ENCODE measurements at regions of chr21 and their contacts with region 1.

Region 1: DNA sequence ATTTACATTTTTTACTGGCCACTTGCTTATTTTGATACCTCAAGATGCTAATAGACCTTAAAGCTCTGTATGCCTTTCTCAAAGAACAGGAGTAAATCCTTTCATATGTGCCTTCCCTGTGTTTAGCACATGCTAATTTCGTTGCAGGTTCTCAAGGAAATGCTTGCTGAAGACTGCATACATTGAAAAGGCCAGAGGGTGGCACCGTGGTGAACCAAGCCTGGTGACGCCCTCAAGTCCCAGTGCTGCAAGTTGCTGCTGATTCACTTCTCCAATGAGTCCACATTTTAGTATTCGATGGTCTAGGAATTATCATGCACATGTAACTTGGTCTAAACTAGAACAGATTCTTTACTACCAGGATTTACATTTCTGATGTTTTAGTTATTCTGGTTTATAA is 94.1 kb downstream of the CLDN17 start:
- DNase-seq: peak in 1 of 2 experiments; percentile 22
- H3K4me3 ChIP-seq: no peak overlapping the region
- H3K27ac ChIP-seq: no peak overlapping the region
- H3K4me1 ChIP-seq: no peaks in the 10 kb centered on the region
- H3K27me3 ChIP-seq: no peaks in the 10 kb centered on the region
- CTCF ChIP-seq: peak; percentile 44; the same call in 1 of the 2 replicates

Region 2: DNA sequence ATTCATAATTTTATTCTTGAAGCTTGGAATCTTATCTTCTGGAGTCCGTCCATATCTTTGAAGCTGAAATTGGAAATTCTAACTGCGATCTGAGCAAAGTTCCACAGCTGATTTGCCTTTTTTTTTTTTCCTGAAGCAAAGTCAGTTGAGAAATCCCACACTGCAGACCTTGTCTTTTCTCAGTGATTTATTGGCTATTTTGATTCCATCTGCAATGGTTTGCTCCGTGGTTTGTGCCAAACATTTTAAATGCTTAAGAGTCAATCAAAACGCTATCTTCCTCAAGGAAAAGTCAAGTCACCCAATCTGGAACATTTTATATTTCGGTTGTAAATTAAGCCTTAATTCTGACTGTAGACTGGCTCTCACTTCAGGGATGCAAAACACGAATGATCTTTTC is 44.5 kb before region 1 on chr21:
- CTCF ChIA-PET with region 1: no interaction called
- POLR2A ChIA-PET with region 1: no interaction called
- intact Hi-C with region 1: no loop called
- DNase-seq: no peak
- H3K4me3 ChIP-seq: no peak overlapping the region
- H3K27ac ChIP-seq: no peak overlapping the region
- H3K4me1 ChIP-seq: no peaks in the 10 kb centered on the region
- H3K27me3 ChIP-seq: no peaks in the 10 kb centered on the region
- CTCF ChIP-seq: no peak

Region 3: GRCh38 chr21:30146558-30147302 is 74.2 kb after region 1 on chr21:
- CTCF ChIA-PET with region 1: no interaction called
- POLR2A ChIA-PET with region 1: no interaction called
- intact Hi-C with region 1: no loop called
- DNase-seq: peak; percentile 49 to 82
- H3K4me3 ChIP-seq: peak overlapping the region; percentile 44; the same call in 1 of the 2 replicates
- H3K27ac ChIP-seq: peak overlapping the region; percentile 91
- H3K4me1 ChIP-seq: peaks cover 14% of the 10 kb centered on the region
- H3K27me3 ChIP-seq: no peaks in the 10 kb centered on the region
- CTCF ChIP-seq: no peak

Region 4: DNA sequence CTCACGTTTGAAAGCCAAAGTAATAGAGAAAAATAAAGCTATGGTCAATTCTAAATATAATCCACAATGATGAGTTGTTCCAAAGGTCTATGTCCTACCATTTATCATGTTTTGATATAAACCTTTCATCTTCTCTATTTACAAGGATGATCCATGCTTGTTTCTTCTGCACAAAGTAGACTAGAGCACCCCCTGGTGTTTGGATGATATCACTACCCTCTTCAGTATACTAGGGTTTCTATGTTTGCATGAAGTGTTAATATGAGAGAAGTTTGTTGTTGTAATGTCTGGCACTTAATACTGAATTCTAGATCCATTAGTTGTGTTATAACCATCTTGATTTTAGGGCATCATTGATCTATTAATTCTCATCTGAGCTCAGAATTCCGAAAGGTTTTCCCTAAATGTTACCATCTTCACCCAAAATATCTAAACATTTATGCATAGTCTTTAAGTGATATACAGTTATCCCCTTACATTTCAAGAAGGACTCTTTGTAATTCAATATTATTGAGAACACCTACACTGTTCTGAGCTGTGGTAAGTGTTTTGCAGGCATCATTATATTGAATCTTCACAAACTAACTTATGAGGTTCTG is 122.3 kb after region 1 on chr21:
- CTCF ChIA-PET with region 1: no interaction called
- POLR2A ChIA-PET with region 1: no interaction called
- intact Hi-C with region 1: loop called (anchors 1 kb)
- DNase-seq: peak in 1 of 2 experiments; percentile 41
- H3K4me3 ChIP-seq: no peak overlapping the region
- H3K27ac ChIP-seq: no peak overlapping the region
- H3K4me1 ChIP-seq: no peaks in the 10 kb centered on the region
- H3K27me3 ChIP-seq: no peaks in the 10 kb centered on the region
- CTCF ChIP-seq: peak; percentile 74

Region 5: DNA sequence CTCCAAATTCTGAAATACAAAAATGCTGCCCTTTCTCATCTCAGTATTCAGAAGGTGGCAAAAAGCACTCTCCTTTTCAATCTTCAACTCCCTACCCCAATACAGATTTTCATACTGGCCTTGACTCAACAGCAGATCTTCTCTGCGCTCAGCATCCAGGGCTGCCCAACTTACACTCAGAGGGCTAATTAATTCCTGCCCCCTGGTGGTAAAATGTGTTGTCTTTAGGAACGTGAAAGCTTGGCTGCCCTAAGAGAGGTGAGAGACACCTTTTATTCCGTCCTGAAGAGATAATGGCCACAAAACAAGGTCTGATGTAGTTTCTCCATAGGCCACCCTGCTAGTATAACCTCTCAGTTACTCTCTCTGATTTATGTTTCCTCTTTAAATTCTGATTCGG is 185.3 kb after region 1 on chr21:
- CTCF ChIA-PET with region 1: no interaction called
- POLR2A ChIA-PET with region 1: no interaction called
- intact Hi-C with region 1: loop called (anchors 2 kb)
- DNase-seq: peak in 1 of 2 experiments; percentile 12
- H3K4me3 ChIP-seq: no peak overlapping the region
- H3K27ac ChIP-seq: no peak overlapping the region
- H3K4me1 ChIP-seq: no peaks in the 10 kb centered on the region
- H3K27me3 ChIP-seq: no peaks in the 10 kb centered on the region
- CTCF ChIP-seq: peak; percentile 51